Endothelial cell of umbilical vein (primary cell): ENCODE measurements at regions of chr4 and their contacts with region 1.

Region 1: GRCh38 chr4:113761620-113762185 is at the start of gene CAMK2D:
- DNase-seq: peak; percentile 91
- H3K4me3 ChIP-seq: peak within 1 kb of the TSS; percentile 93 to 98 (median 97)
- H3K27ac ChIP-seq: peak within 1 kb of the TSS; percentile 84
- H3K4me1 ChIP-seq: peaks cover 21% of the 10 kb centered on the region
- H3K27me3 ChIP-seq: no peaks in the 10 kb centered on the region
- CTCF ChIP-seq: peak; percentile 35 to 72
- POLR2A ChIP-seq: peak; percentile 51
- total RNA-seq, gene CAMK2D: 23.0 and 30.7 TPM in 2 replicates

Region 2: DNA sequence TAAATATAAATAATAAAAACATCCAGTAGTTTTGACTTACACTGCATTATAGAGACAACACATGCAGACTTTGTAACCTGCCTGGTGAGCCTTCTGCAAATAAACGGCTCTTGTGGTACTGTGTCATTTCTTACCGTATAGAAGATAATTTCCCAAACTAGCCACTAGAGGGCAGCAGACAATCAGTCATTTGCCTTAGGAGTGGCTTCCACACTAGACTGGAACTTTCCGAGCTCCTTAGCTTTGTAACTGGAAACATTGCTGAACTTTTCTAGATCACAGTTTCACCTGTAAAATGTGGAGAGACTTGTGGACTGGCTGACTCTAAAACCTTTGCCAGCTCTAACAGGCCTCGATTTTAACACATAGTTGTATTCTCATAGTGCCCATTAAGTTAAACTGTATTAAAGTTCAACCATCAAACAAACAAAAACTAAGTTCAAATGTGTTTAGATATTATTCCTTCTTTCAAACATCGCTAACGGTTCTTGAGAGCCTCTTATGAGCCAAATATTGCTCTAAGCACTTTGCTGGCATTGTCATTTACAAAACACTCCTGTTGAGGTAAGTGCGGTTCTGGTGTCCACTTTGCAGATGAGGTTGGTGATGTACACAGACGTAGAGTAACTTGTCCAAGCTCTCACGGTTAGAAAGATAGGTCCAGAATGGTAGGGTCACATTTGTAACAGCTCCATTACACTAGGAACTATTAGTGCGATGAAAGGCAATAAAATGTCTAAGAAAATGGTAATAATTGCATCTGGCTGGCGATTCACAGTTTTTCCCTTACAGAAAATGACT is 366.8 kb before region 1 on chr4:
- CTCF ChIA-PET with region 1: interaction called, 24 read pairs
- POLR2A ChIA-PET with region 1: no interaction called
- dilution Hi-C with region 1: no loop called
- intact Hi-C with region 1: loop called (anchors 1 kb)
- DNase-seq: peak; percentile 92
- H3K4me3 ChIP-seq: no peak overlapping the region
- H3K27ac ChIP-seq: no peak overlapping the region
- H3K4me1 ChIP-seq: peaks cover 6% of the 10 kb centered on the region
- H3K27me3 ChIP-seq: no peaks in the 10 kb centered on the region
- CTCF ChIP-seq: peak; percentile 43 to 50
- POLR2A ChIP-seq: no peak

Region 3: DNA sequence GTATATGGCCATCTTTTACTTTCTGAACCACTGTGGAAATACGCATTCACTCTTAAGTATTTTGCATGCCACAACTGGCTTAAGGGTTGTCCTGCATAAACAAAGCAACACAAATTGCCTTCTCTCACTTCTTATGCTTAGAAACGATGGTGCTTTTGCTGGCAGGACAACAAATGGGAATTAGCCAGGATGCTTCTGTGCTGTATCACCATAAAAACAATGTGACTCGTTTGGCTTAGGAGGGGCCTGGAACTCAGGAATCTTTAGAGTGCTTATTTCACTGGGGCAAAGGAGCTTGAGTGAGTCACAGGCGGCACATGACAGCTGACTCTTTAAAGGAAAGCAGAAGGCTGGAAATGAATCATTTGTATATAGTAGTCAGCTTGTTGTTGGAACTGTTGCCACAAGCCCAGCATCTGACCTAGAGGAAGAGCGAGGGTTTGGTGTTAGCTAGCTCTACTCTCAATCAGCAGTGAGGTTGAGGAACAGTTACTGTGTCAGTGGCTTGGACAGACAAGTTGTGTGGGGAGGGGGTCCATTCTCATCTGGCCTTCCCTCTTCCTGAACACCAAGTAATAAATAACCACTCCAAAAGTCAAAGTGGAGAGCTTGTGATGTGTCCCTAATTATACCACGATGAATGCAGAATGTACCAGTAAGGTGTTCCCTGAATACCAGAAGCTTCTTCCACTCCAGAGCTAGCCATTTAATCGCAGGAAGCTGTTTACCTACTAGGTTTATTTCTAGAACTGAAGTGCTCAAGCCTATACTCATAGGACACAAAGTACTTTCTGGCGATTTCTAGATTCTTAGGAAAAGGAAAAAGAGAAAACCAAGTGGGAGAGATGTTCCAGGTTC is 293.3 kb before region 1 on chr4:
- CTCF ChIA-PET with region 1: no interaction called
- POLR2A ChIA-PET with region 1: interaction called, 3 read pairs
- dilution Hi-C with region 1: no loop called
- intact Hi-C with region 1: loop called (anchors 1 kb)
- DNase-seq: peak; percentile 100
- H3K4me3 ChIP-seq: peak overlapping the region in 1 of 3 experiments; percentile 7
- H3K27ac ChIP-seq: peak overlapping the region; percentile 96
- H3K4me1 ChIP-seq: peaks cover 31% of the 10 kb centered on the region
- H3K27me3 ChIP-seq: no peaks in the 10 kb centered on the region
- CTCF ChIP-seq: no peak
- POLR2A ChIP-seq: peak; percentile 40

Region 4: DNA sequence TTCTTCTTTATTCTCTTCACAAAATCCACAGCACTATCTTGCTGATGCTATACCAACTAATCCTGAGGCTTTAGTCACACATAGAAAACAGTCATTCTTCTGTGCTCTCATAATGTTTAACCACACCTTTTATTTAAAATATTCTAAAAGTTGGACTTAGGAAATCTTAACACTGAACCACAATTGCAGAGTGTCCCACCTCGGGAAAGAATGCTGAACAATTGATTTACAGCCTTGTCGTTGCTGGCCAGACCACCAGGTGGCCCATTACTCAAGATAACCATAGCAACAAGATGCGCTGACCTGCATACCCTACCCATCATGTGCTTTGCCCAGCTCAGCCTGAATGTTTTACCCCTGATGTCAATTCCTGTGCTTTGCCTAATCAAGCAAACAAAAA is 117.0 kb after region 1 on chr4:
- CTCF ChIA-PET with region 1: no interaction called
- POLR2A ChIA-PET with region 1: no interaction called
- dilution Hi-C with region 1: no loop called
- intact Hi-C with region 1: loop called (anchors 5 kb)
- DNase-seq: peak; percentile 40
- H3K4me3 ChIP-seq: no peak overlapping the region
- H3K27ac ChIP-seq: no peak overlapping the region
- H3K4me1 ChIP-seq: peaks cover 16% of the 10 kb centered on the region
- H3K27me3 ChIP-seq: no peaks in the 10 kb centered on the region
- CTCF ChIP-seq: peak; percentile 25 to 30
- POLR2A ChIP-seq: no peak

Region 5: GRCh38 chr4:114015444-114015899 is 253.8 kb after region 1 on chr4:
- CTCF ChIA-PET with region 1: no interaction called
- POLR2A ChIA-PET with region 1: no interaction called
- dilution Hi-C with region 1: no loop called
- intact Hi-C with region 1: loop called (anchors 1 kb)
- DNase-seq: peak; percentile 99
- H3K4me3 ChIP-seq: no peak overlapping the region
- H3K27ac ChIP-seq: peak overlapping the region; percentile 96
- H3K4me1 ChIP-seq: peaks cover 36% of the 10 kb centered on the region
- H3K27me3 ChIP-seq: no peaks in the 10 kb centered on the region
- CTCF ChIP-seq: no peak
- POLR2A ChIP-seq: peak; percentile 74

Region 6: GRCh38 chr4:114386637-114387233 is 625.0 kb after region 1 on chr4:
- CTCF ChIA-PET with region 1: interaction called, 4 read pairs
- POLR2A ChIA-PET with region 1: no interaction called
- dilution Hi-C with region 1: no loop called
- intact Hi-C with region 1: loop called (anchors 5 kb)
- DNase-seq: peak; percentile 59
- H3K4me3 ChIP-seq: no peak overlapping the region
- H3K27ac ChIP-seq: no peak overlapping the region
- H3K4me1 ChIP-seq: no peaks in the 10 kb centered on the region
- H3K27me3 ChIP-seq: peaks cover 5 to 11% of the 10 kb centered on the region in 2 experiments
- CTCF ChIP-seq: peak; percentile 37 to 50
- POLR2A ChIP-seq: no peak